ENCODE measurements at regions of chr11 and their contacts with region 1.

Region 1: GRCh38 chr11:112339566-112339965 is 78.9 kb upstream of the PLET1 start:
- DNase-seq: no peak
- H3K4me3 ChIP-seq: no peak overlapping the region
- H3K27ac ChIP-seq: no peak overlapping the region
- H3K4me1 ChIP-seq: peaks cover 0 to 17% (median 0%) of the 10 kb centered on the region in 3 donors
- H3K27me3 ChIP-seq: no peaks in the 10 kb centered on the region
- CTCF ChIP-seq: no peak
- POLR2A ChIP-seq: no peak

Region 2: GRCh38 chr11:112504066-112504465 is 164.5 kb after region 1 on chr11:
- intact Hi-C with region 1: no loop called
- DNase-seq: no peak
- H3K4me3 ChIP-seq: no peak overlapping the region
- H3K27ac ChIP-seq: no peak overlapping the region
- H3K4me1 ChIP-seq: no peaks in the 10 kb centered on the region
- H3K27me3 ChIP-seq: peaks cover 0 to 7% (median 0%) of the 10 kb centered on the region in 4 donors
- CTCF ChIP-seq: no peak
- POLR2A ChIP-seq: no peak

Region 3: GRCh38 chr11:112555491-112556364 is 216.2 kb after region 1 on chr11:
- intact Hi-C with region 1: loop called (anchors 5 kb)
- DNase-seq: no peak
- H3K4me3 ChIP-seq: no peak overlapping the region
- H3K27ac ChIP-seq: no peak overlapping the region
- H3K4me1 ChIP-seq: peaks cover 0 to 4% (median 0%) of the 10 kb centered on the region in 3 donors
- H3K27me3 ChIP-seq: no peaks in the 10 kb centered on the region
- CTCF ChIP-seq: peak; percentile 28 to 65 (median 55)
- POLR2A ChIP-seq: no peak